K562 (cell line): ENCODE measurements at regions of chr2 and their contacts with region 1.

Region 1: GRCh38 chr2:10064932-10065772 is 15.1 kb downstream of the CYS1 start:
- DNase-seq: no peak
- ATAC-seq: no peak
- H3K4me3 ChIP-seq: no peak overlapping the region
- H3K27ac ChIP-seq: no peak overlapping the region
- H3K4me1 ChIP-seq: peaks cover 0 to 20% of the 10 kb centered on the region in 2 experiments; a peak in 2 of 5 replicates
- H3K27me3 ChIP-seq: no peaks in the 10 kb centered on the region
- CTCF ChIP-seq: no peak
- EP300 ChIP-seq: no peak
- POLR2A ChIP-seq: no peak
- RAD21 ChIP-seq: no peak

Region 2: GRCh38 chr2:10225291-10226037 is 160.3 kb after region 1 on chr2:
- CTCF ChIA-PET with region 1: no interaction called
- POLR2A ChIA-PET with region 1: no interaction called
- in situ Hi-C with region 1: no loop called
- intact Hi-C with region 1: no loop called
- DNase-seq: no peak
- ATAC-seq: no peak
- H3K4me3 ChIP-seq: no peak overlapping the region
- H3K27ac ChIP-seq: no peak overlapping the region
- H3K4me1 ChIP-seq: peaks cover 2 to 9% of the 10 kb centered on the region in 2 experiments; a peak in 3 of 5 replicates
- H3K27me3 ChIP-seq: peaks cover 0 to 17% of the 10 kb centered on the region in 2 experiments; a peak in 3 of 5 replicates
- CTCF ChIP-seq: no peak
- EP300 ChIP-seq: no peak
- POLR2A ChIP-seq: no peak
- RAD21 ChIP-seq: no peak

Region 3: DNA sequence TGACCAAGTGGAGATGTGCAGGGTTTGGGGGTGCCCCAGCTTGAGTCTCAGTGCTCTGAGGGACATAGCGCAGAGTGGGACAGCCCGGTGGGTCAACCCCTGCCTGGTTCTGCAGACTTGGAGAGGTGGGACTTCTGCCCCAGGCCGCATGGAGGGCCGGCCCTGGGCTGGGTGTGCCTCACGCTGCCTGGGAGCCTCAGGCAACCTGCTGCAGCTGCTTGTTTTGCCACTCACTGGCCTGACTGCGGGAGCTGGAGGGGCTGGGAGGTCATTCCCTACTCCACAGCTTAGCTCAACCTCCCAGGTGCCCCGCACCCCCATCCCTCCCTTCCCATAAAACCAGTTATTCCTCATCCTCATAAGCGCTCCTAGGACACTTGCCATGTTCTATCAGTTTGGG is 349.9 kb after region 1 on chr2:
- CTCF ChIA-PET with region 1: no interaction called
- POLR2A ChIA-PET with region 1: no interaction called
- in situ Hi-C with region 1: loop called (anchors 5 kb)
- intact Hi-C with region 1: no loop called
- DNase-seq: no peak
- ATAC-seq: no peak
- H3K4me3 ChIP-seq: no peak overlapping the region
- H3K27ac ChIP-seq: no peak overlapping the region
- H3K4me1 ChIP-seq: peaks cover 0 to 20% of the 10 kb centered on the region in 2 experiments; a peak in 3 of 5 replicates
- H3K27me3 ChIP-seq: no peaks in the 10 kb centered on the region
- CTCF ChIP-seq: no peak
- EP300 ChIP-seq: no peak
- POLR2A ChIP-seq: no peak
- RAD21 ChIP-seq: no peak